ENCODE measurements at regions of chr17 and their contacts with region 1.

Region 1: GRCh38 chr17:64216338-64217248 is 46.5 kb downstream of the TEX2 start:
- DNase-seq: peak; percentile 94
- ATAC-seq: peak; percentile 99
- H3K4me3 ChIP-seq: peak overlapping the region; percentile 40 to 68 (median 55)
- H3K27ac ChIP-seq: peak overlapping the region; percentile 97
- H3K4me1 ChIP-seq: peaks cover 48% of the 10 kb centered on the region
- H3K27me3 ChIP-seq: no peaks in the 10 kb centered on the region
- CTCF ChIP-seq: peak; percentile 93
- EP300 ChIP-seq: peak; percentile 50 to 85; a peak in 3 of 4 replicates
- POLR2A ChIP-seq: peak; percentile 70 to 75; a peak in 3 of 4 replicates
- RAD21 ChIP-seq: peak; percentile 84; the same call in 1 of the 2 replicates

Region 2: GRCh38 chr17:64005734-64006167 is 210.8 kb before region 1 on chr17:
- CTCF ChIA-PET with region 1: no interaction called
- POLR2A ChIA-PET with region 1: no interaction called
- in situ Hi-C with region 1: no loop called
- intact Hi-C with region 1: no loop called
- DNase-seq: peak; percentile 62
- ATAC-seq: peak; percentile 70
- H3K4me3 ChIP-seq: peak overlapping the region in 2 of 3 experiments; percentile 15 to 67; a peak in 3 of 6 replicates
- H3K27ac ChIP-seq: peak overlapping the region; percentile 8
- H3K4me1 ChIP-seq: peaks cover 74% of the 10 kb centered on the region
- H3K27me3 ChIP-seq: no peaks in the 10 kb centered on the region
- CTCF ChIP-seq: peak; percentile 39; the same call in 1 of the 2 replicates
- EP300 ChIP-seq: no peak
- POLR2A ChIP-seq: no peak
- RAD21 ChIP-seq: no peak

Region 3: GRCh38 chr17:64155751-64156544 is 60.6 kb before region 1 on chr17:
- CTCF ChIA-PET with region 1: no interaction called
- POLR2A ChIA-PET with region 1: interaction called, 127 read pairs
- in situ Hi-C with region 1: no loop called
- intact Hi-C with region 1: loop called (anchors 2 kb)
- DNase-seq: peak; percentile 98
- ATAC-seq: peak; percentile 94
- H3K4me3 ChIP-seq: peak overlapping the region; percentile 4 to 64 (median 6); a peak in 4 of 6 replicates
- H3K27ac ChIP-seq: peak overlapping the region; percentile 88
- H3K4me1 ChIP-seq: peaks cover 79% of the 10 kb centered on the region
- H3K27me3 ChIP-seq: no peaks in the 10 kb centered on the region
- CTCF ChIP-seq: peak; percentile 45
- EP300 ChIP-seq: peak in 1 of 2 experiments; percentile 59; a peak in 2 of 4 replicates
- POLR2A ChIP-seq: peak; percentile 70 to 86
- RAD21 ChIP-seq: peak; percentile 67; the same call in 1 of the 2 replicates

Region 4: DNA sequence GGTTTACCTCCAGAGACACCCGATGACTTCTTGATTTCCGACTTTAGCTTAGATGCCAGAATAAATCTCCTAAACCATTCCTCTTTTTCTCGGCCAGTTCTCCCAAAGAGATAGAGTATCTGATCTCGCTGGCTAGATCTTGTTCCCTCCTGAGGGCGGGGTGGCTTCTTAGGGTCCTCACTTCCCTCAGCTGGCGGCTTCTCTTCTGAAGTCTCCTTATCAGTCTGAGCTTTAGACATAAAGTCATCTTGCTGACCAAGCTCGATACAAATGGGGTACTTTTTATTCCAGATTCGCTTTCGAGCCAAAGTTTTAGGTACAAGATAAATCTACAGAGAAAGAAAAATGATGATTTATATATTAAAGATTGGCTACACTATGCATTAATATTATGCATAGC is 23.0 kb before region 1 on chr17:
- CTCF ChIA-PET with region 1: no interaction called
- POLR2A ChIA-PET with region 1: interaction called, 15 read pairs
- in situ Hi-C with region 1: no loop called
- intact Hi-C with region 1: no loop called
- DNase-seq: no peak
- ATAC-seq: no peak
- H3K4me3 ChIP-seq: no peak overlapping the region
- H3K27ac ChIP-seq: no peak overlapping the region
- H3K4me1 ChIP-seq: peaks cover 6% of the 10 kb centered on the region
- H3K27me3 ChIP-seq: no peaks in the 10 kb centered on the region
- CTCF ChIP-seq: no peak
- EP300 ChIP-seq: no peak
- POLR2A ChIP-seq: no peak
- RAD21 ChIP-seq: no peak

Region 5: GRCh38 chr17:64240741-64241347 is 24.3 kb after region 1 on chr17:
- CTCF ChIA-PET with region 1: no interaction called
- POLR2A ChIA-PET with region 1: interaction called, 3 read pairs
- in situ Hi-C with region 1: no loop called
- intact Hi-C with region 1: loop called (anchors 2 kb)
- DNase-seq: no peak
- ATAC-seq: peak; percentile 21; the same call in 1 of the 3 replicates
- H3K4me3 ChIP-seq: no peak overlapping the region
- H3K27ac ChIP-seq: no peak overlapping the region
- H3K4me1 ChIP-seq: peaks cover 26% of the 10 kb centered on the region
- H3K27me3 ChIP-seq: no peaks in the 10 kb centered on the region
- CTCF ChIP-seq: no peak
- EP300 ChIP-seq: no peak
- POLR2A ChIP-seq: no peak
- RAD21 ChIP-seq: no peak

Region 6: DNA sequence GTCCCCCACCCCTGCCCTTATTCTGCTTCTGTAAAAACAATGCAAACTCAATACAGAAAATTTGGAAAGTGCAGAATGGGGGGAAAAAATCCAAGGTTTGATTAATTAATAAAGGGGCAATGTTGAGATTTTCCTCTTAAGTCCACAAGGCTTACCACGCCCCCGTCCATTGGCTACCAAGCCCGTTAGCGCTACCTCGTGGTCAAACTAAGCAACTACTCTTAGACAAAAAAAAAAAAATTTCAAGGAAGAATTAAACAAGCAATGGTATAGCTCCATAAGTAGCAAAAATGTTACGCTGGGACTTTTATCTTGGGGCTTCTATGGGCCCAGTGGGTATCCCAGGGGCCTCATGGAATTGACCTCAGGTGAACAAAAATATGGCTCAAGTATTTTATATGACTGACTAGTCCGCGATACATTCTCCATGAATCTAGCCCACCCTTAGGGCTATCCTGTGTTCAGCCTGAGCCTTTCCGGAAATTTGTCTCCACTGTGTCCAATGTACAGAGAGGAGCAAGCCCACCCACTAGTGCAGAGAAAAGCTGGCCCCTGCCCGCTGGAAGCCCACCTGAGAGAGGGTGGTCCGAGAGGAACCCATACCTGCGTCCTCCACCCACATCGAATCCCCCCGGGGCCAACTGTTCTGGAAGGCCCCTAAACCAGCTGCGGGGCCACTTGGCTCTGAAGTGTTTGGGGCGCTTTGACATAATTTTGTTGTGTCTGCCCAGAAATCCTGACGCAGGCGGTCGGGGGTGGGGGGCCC is 65.6 kb after region 1 on chr17:
- CTCF ChIA-PET with region 1: interaction called, 6 read pairs
- POLR2A ChIA-PET with region 1: interaction called, 4 read pairs
- in situ Hi-C with region 1: no loop called
- intact Hi-C with region 1: loop called (anchors 1 kb)
- DNase-seq: peak; percentile 72
- ATAC-seq: peak; percentile 48
- H3K4me3 ChIP-seq: no peak overlapping the region
- H3K27ac ChIP-seq: no peak overlapping the region
- H3K4me1 ChIP-seq: peaks cover 31% of the 10 kb centered on the region
- H3K27me3 ChIP-seq: no peaks in the 10 kb centered on the region; a peak in 1 of 5 replicates
- CTCF ChIP-seq: peak; percentile 85
- EP300 ChIP-seq: no peak
- POLR2A ChIP-seq: no peak
- RAD21 ChIP-seq: peak; percentile 85

Measured in HepG2 (cell line).